Activated T-helper 1 cell treated with anti-CD3 and anti-CD28 coated beads, Interleukin-12 subunit alpha, Interleukin-12 subunit beta, Interleukin-2, Interleukin-4 antibody, amounts not matched to agents 30 ng/mL and 10 ng/mL and 1 ng/mL, durations not matched to agents 14 hours and 24 hours and 36 hours (primary cell): ENCODE measurements at regions of chr11 and their contacts with region 1.

Region 1: DNA sequence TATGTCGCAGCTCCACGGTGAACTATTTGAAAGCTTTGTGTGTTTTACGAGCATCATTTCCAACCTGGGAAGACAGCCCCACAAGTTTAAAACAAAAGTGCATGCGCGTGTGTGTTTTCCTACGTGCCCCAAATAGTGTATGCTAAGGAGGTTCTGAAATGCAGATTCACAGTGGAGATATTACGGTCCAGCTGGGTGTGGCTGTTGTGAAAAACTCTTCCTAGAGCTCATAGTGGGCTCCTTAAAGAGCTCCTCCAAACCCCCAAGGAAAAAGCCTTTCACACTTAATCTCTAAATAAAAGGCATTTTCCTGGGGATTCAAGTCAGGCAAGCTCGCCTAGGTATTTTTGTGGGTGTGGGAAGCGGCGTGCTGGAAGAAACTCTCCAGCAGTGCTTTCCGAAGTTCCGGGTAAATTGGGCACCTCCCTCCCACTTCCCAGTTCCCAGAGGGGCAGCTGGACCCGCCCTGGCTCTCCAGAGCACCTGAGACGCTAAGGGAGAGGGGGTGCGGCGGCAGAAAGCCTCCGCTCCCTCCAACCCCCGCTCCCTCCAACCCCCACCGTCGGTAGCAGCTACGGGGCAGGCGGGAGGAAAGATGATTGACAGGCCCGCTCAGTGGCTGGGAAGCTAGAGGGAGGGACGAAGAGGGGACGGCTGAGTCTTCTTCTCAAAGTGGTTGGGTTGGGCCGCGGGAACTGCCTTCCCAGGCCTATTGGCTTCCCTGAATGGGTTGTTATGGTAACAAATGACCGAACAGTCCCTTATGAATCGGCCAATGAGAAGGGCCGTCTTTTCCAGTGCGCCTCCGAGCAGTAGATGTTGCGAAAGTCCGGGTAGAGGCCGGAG is 558 bp upstream of the PCF11 start:
- DNase-seq: peak; percentile 95
- H3K4me3 Mint-ChIP-seq: peak overlapping the region; percentile 97
- H3K27ac Mint-ChIP-seq: peak overlapping the region; percentile 96
- H3K4me1 Mint-ChIP-seq: peaks cover 36% of the 10 kb centered on the region
- H3K27me3 Mint-ChIP-seq: no peaks in the 10 kb centered on the region

Region 2: DNA sequence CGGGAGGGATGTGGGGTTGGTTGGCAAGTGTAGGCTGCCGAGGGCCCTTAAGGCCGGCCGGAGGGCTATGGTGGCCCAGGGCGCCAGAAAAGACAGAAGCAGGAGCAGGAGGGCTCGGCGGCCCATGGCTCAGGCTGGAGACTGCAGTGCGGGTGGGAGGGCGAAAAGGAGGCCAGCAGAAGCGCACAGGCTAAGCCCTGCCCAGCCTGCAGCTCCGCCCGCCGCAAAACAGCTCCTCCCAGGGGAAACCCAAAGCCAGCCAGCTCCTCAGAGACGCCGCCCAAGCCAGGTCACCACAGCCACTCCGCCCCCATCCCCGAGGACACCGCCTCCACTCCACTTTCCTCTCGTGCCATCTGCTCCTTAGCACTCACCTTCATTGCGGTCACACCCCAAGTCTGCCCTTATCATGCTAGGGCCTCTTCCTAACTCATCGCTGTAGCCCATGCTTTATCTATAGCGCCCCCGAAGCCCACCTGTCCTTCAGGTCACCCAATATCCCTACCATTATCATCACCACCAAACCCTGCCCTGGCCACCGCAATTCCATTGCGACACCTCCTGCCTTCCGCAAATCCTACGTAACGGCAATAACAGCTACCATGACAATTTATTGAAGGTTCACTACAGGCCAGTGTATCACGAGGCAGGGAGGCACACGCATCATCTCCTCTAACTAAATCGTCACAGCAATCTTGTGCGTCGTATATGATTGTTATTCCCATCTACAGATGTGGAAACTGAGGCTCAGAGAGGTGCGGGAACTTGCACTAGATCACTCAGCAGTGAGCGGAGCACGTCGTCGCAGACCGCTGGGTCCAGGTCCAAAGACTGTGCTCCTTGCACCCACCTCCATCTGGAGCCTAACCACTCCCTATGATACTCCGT is 255.9 kb before region 1 on chr11 and contains the start of gene PRCP:
- intact Hi-C with region 1: loop called (anchors 1 kb)
- DNase-seq: peak; percentile 93
- H3K4me3 Mint-ChIP-seq: peak within 1 kb of the TSS; percentile 99
- H3K27ac Mint-ChIP-seq: peak within 1 kb of the TSS; percentile 100
- H3K4me1 Mint-ChIP-seq: peaks cover 70% of the 10 kb centered on the region
- H3K27me3 Mint-ChIP-seq: no peaks in the 10 kb centered on the region
- total RNA-seq, gene PRCP: 22.7 and 24.0 TPM in 2 replicates

Region 3: DNA sequence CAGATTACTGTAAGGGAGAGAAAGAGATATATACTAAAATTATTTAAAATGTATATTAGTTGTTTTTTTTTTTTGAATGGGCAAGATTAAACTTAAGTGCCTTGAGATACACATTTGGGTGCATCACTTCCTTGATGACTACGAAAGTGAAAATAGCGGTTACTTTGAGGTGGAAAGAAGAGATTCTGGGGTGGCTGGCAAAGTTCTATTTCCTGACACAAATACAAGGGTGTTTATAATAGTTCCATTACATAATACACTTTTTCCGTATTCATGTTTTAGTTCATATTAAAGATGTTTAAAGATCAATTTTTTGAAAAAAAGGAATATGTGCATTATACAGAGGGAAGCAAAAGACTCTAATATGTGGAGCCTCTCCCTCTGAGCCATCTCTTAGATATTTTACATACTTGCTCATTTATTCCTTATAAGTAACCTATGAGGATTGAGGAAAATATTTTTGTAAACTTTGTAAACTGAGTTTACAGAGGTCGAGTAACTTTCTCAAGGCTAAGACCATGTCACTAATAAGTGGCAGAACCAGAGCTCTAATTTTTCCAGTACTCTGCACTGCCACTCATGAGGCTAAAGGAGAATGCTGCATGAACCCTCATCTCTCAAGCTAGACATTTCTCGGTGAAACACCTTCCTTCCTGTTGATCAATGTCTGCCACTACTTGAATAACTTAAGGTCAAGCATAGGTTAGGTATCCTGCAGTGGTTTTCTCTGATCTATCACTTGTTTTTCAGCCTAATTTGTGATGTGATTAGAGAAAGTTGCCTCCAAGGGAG is 196.2 kb before region 1 on chr11:
- intact Hi-C with region 1: loop called (anchors 1 kb)
- DNase-seq: peak; percentile 42
- H3K4me3 Mint-ChIP-seq: peak overlapping the region; percentile 68
- H3K27ac Mint-ChIP-seq: peak overlapping the region; percentile 91
- H3K4me1 Mint-ChIP-seq: peaks cover 59% of the 10 kb centered on the region
- H3K27me3 Mint-ChIP-seq: no peaks in the 10 kb centered on the region

Region 4: GRCh38 chr11:82996966-82997606 is 159.3 kb before region 1 on chr11:
- intact Hi-C with region 1: loop called (anchors 1 kb)
- DNase-seq: no peak
- H3K4me3 Mint-ChIP-seq: no peak overlapping the region
- H3K27ac Mint-ChIP-seq: peak overlapping the region; percentile 37
- H3K4me1 Mint-ChIP-seq: peaks cover 67% of the 10 kb centered on the region
- H3K27me3 Mint-ChIP-seq: no peaks in the 10 kb centered on the region

Region 5: DNA sequence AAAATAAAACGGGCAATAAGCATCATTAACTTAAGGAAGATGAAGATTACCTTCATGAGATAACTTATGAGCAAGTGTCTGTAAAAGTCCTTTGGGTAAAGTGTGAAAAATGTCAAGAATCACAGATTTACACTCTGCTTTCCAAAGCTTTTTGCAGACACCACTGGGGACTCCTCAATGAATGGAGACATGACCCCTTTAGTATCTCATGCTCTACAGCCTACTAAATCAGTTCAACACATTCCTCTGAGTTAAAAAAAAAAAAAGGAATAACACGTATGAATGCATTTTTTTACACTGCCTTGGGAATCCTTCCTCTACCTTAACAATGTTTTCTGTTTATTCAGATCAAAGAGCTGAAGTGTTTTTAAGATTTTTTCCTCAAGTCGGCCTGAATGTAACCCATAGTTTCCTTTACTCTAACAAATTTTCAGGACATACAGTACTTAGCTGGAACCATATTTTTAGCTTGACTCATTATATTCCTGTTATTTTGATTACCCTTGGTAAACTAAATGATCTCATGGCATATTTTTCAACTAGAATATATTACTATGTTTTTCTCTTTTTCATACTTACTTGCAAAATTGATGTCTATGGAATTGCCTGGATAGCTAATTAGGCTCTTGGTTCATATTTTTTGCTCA is 58.8 kb before region 1 on chr11:
- intact Hi-C with region 1: no loop called
- DNase-seq: no peak
- H3K4me3 Mint-ChIP-seq: no peak overlapping the region
- H3K27ac Mint-ChIP-seq: no peak overlapping the region
- H3K4me1 Mint-ChIP-seq: no peaks in the 10 kb centered on the region
- H3K27me3 Mint-ChIP-seq: peaks cover 6% of the 10 kb centered on the region

Region 6: DNA sequence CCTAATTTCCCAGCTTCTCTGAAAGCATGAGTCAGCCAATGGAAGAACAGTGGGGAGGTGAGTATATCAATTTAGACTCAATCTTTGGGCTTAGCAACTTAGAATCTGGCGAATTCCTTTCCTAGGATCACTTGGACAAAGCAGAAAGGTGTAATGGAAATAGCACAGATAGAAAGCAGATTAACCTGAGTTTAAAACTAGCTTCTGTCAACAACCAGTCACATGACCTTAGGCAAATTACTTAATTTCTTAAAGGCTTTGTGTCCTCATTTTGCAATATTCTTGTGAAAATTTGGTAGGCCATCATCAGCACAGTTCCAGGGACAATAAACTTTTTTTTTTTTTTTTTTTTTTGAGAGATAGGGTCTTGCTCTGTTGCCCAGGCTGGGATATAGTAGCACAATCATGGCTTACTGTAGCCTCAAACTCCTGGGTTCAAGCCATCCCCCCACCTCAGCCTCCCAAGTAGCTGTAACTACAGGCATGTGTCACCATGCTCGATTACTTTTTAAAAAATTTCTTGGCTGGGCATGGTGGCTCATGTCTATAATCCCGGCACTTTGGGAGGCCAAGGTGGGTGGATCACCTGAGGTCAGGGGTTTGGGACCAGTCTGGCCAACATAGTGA is 40.2 kb before region 1 on chr11:
- intact Hi-C with region 1: loop called (anchors 2 kb)
- DNase-seq: no peak
- H3K4me3 Mint-ChIP-seq: peak overlapping the region; percentile 32
- H3K27ac Mint-ChIP-seq: no peak overlapping the region
- H3K4me1 Mint-ChIP-seq: peaks cover 40% of the 10 kb centered on the region
- H3K27me3 Mint-ChIP-seq: no peaks in the 10 kb centered on the region

Region 7: DNA sequence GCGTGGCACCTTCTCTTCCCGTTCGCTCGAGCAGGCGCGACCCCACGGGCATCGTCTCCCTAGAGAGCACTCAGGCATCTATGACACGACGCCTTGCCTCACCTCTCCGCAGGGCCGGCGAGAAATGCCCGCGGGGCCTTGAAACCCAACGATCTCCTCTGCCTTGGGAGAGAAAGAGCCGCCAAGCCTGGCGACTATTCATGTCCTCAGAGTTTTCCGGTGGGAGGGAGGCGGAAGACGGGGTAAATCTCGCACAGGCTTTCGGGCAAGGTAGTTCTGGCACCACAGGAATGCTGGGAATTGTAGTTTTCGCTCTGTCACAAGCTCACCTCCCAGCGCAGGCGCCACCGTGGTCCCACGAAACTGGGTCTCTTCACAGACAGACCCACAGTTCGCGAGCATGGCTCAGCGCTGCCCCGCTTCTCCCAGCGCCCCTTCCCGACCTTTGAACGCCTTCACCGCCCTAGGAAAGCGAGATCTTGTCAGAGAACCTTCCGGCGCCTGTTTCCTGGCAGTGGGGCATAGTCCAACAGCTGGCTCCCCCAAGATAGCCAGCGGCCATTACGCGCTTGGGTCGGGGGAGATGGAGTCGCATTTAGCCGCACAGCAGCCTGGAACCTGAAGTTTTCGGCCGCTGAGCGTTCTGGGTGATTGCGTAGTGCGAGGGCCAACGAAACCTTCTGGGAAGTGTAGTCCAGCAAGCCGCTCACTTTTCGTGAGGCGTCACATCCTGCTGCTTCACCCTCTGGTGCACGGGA is 129.6 kb after region 1 on chr11 and contains the start of gene CCDC90B:
- intact Hi-C with region 1: loop called (anchors 1 kb)
- DNase-seq: peak; percentile 91
- H3K4me3 Mint-ChIP-seq: peak within 1 kb of the TSS; percentile 96
- H3K27ac Mint-ChIP-seq: peak within 1 kb of the TSS; percentile 95
- H3K4me1 Mint-ChIP-seq: peaks cover 21% of the 10 kb centered on the region
- H3K27me3 Mint-ChIP-seq: peaks cover 4% of the 10 kb centered on the region
- total RNA-seq, gene CCDC90B: 24.2 and 24.5 TPM in 2 replicates